Activated CD4-positive, alpha-beta memory T cell treated with anti-CD3 and anti-CD28 coated beads, Interleukin-2, amount 10 ng/mL, durations not matched to agents 7 days and 5 days (primary cell): ENCODE measurements at regions of chr12 and their contacts with region 1.

Region 1: DNA sequence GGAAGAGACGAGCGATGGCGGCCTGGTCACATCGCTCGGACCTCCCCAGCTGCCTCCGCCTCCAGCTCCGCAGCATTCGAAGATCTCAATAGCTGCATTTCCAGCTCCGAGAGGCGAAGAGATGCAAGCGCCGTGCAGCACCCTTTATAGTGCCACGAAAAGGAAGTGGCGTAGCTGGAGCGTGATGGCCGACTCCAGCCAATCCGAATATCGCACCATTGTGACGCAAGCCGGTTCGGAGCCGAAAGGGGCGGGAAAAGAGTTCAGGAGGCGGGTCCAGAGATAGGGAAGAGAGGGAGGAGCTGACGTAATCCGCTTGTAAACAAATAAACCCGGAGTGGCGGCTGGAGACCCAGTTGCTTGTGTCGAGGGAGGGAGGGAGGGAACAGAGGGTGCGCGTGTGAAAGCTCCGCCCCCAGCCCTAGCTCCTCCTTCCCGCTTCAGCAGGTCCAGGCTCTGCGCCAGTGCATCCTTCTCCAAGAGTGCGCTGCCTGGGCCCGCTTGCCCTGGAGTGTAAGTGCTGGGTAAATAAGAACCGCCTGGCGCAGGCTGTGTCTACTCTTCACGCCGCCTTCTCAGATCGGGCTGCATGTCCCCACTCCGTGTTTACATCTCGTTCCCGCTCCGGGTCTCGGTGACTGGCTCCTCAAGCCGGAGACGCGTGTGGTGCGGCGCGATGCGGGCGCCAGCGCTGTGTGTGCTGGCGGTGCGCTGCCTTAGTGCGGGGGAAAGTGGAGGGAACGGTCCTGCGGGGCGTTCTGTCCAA is at the start of gene BTG1:
- DNase-seq: peak; percentile 100
- H3K4me3 Mint-ChIP-seq: peak within 1 kb of the TSS; percentile 99
- H3K27ac Mint-ChIP-seq: peak within 1 kb of the TSS; percentile 98
- H3K4me1 Mint-ChIP-seq: peaks cover 27% of the 10 kb centered on the region
- H3K27me3 Mint-ChIP-seq: no peaks in the 10 kb centered on the region
- total RNA-seq, gene BTG1: 217 to 227 TPM

Region 2: DNA sequence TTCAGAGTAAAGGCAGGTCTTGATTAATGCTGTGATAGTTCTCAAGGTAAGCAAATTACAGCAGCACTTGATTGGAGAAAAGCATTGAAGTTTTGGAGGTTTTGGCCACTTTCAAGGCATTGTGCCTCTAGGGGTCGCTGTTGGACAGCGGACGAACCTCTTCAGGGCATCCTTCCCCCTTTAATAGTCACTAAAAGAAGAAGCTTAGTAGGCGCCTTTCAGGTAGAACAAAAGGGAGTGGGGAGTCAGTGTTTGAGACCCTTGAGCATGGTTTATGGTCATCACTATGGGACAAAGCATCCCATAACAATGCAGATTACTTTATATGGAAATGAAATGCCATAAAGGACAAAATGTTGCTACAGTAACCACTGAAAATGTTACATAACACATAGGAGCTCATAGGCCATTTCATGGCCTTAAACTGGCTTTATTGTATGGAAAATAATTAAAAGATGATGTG is 763.8 kb before region 1 on chr12:
- CTCF ChIA-PET with region 1: interaction called, 10 read pairs
- POLR2A ChIA-PET with region 1: interaction called, 10 read pairs
- DNase-seq: peak; percentile 83
- H3K4me3 Mint-ChIP-seq: peak overlapping the region; percentile 67
- H3K27ac Mint-ChIP-seq: peak overlapping the region; percentile 36
- H3K4me1 Mint-ChIP-seq: peaks cover 10% of the 10 kb centered on the region
- H3K27me3 Mint-ChIP-seq: peaks cover 2% of the 10 kb centered on the region

Region 3: DNA sequence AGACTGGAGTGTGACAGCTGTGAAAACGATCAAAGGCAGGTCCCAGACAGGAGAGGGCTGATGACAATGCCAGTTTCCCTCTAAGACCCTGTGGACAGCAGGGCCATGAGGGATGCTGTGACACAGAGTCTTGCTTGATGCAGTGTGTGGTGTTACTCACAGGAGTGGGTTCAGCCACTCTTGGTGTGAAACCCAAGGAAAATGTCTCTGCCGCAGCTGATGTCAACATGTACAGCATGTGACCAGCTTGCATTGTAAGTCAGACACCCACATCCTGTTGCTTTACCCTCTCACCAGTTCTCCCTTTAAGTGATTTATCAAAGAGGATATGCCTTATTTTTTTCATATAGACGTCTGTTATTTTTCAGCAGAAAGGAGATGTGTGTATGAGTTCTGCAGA is 268.9 kb before region 1 on chr12:
- CTCF ChIA-PET with region 1: interaction called, 15 read pairs
- POLR2A ChIA-PET with region 1: interaction called, 95 read pairs
- DNase-seq: peak; percentile 89
- H3K4me3 Mint-ChIP-seq: peak overlapping the region; percentile 37
- H3K27ac Mint-ChIP-seq: peak overlapping the region; percentile 91
- H3K4me1 Mint-ChIP-seq: peaks cover 47% of the 10 kb centered on the region
- H3K27me3 Mint-ChIP-seq: no peaks in the 10 kb centered on the region

Region 4: GRCh38 chr12:92034858-92035401 is 111.0 kb before region 1 on chr12:
- CTCF ChIA-PET with region 1: interaction called, 10 read pairs
- POLR2A ChIA-PET with region 1: interaction called, 153 read pairs
- DNase-seq: peak; percentile 54
- H3K4me3 Mint-ChIP-seq: peak overlapping the region; percentile 88
- H3K27ac Mint-ChIP-seq: peak overlapping the region; percentile 95
- H3K4me1 Mint-ChIP-seq: peaks cover 60% of the 10 kb centered on the region
- H3K27me3 Mint-ChIP-seq: no peaks in the 10 kb centered on the region

Region 5: GRCh38 chr12:92158796-92159439 is 13.0 kb after region 1 on chr12:
- CTCF ChIA-PET with region 1: no interaction called
- POLR2A ChIA-PET with region 1: interaction called, 12 read pairs
- DNase-seq: no peak
- H3K4me3 Mint-ChIP-seq: no peak overlapping the region
- H3K27ac Mint-ChIP-seq: no peak overlapping the region
- H3K4me1 Mint-ChIP-seq: peaks cover 13% of the 10 kb centered on the region
- H3K27me3 Mint-ChIP-seq: no peaks in the 10 kb centered on the region

Region 6: GRCh38 chr12:92297932-92298696 is 152.2 kb after region 1 on chr12:
- CTCF ChIA-PET with region 1: no interaction called
- POLR2A ChIA-PET with region 1: interaction called, 37 read pairs
- DNase-seq: peak; percentile 22
- H3K4me3 Mint-ChIP-seq: peak overlapping the region; percentile 2
- H3K27ac Mint-ChIP-seq: peak overlapping the region; percentile 82
- H3K4me1 Mint-ChIP-seq: peaks cover 16% of the 10 kb centered on the region
- H3K27me3 Mint-ChIP-seq: no peaks in the 10 kb centered on the region

Region 7: DNA sequence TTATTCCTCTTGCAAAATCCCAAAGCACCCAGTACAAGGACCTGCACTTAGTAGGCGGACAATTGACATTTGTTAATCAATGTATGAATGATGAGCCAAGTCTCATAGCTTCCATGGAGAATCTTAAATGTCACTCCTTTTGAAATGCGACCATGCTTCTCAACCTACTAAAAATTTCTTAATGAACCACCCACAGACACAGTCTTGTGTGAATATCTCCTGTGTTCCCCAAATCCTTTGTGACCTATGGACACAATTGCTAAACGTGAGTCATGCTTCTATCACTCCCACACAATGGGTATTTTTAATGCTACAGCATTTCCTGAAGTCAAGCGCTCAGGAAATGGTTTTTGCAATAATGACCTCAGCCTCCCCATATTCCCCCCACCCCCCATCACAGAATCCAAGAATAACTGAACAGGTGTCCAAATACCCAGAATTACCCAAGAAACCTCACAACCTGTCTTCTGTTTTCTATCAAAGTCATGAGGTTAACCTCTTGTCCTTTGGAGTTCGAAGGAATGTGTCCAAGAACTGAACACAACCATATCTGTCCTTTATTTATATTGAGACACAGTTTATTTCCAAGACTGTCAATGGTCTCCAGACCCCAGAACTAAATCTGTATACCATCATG is 393.3 kb after region 1 on chr12:
- CTCF ChIA-PET with region 1: no interaction called
- POLR2A ChIA-PET with region 1: interaction called, 14 read pairs
- DNase-seq: peak; percentile 39
- H3K4me3 Mint-ChIP-seq: no peak overlapping the region
- H3K27ac Mint-ChIP-seq: peak overlapping the region; percentile 94
- H3K4me1 Mint-ChIP-seq: peaks cover 68% of the 10 kb centered on the region
- H3K27me3 Mint-ChIP-seq: no peaks in the 10 kb centered on the region